Activated naive CD4-positive, alpha-beta T cell treated with anti-CD3 and anti-CD28 coated beads for 36 hours (primary cell): ENCODE measurements at regions of chr19 and their contacts with region 1.

Region 1: GRCh38 chr19:2061495-2062381 is 10.7 kb upstream of the MKNK2 start:
- DNase-seq: peak; percentile 99
- H3K4me3 Mint-ChIP-seq: peak overlapping the region; percentile 87
- H3K27ac Mint-ChIP-seq: peak overlapping the region; percentile 86
- H3K4me1 Mint-ChIP-seq: peaks cover 36% of the 10 kb centered on the region
- H3K27me3 Mint-ChIP-seq: no peaks in the 10 kb centered on the region

Region 2: GRCh38 chr19:1884719-1885334 is 176.9 kb before region 1 on chr19:
- CTCF ChIA-PET with region 1: no interaction called
- intact Hi-C with region 1: loop called (anchors 5 kb)
- DNase-seq: no peak
- H3K4me3 Mint-ChIP-seq: peak overlapping the region; percentile 96
- H3K27ac Mint-ChIP-seq: peak overlapping the region; percentile 95
- H3K4me1 Mint-ChIP-seq: peaks cover 27% of the 10 kb centered on the region
- H3K27me3 Mint-ChIP-seq: no peaks in the 10 kb centered on the region

Region 3: DNA sequence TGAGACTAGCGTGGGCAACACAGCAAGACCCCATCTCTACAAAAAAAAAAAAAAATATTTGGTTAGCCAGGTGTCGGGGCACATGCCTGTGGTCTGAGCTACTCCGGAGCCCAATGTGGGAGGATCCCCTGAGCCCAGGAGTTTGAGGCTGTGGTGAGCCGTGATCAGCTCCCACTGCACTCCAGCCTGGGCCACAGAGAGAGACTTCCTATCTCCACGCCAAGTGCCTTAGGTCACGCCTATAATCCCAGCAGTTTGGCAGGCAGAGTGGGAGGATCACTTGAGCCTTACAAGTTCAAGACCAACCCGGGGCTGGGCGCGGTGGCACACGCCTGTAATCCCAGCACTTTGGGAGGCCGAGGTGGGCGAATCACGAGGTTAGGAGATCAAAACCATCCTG is 165.2 kb before region 1 on chr19:
- CTCF ChIA-PET with region 1: no interaction called
- intact Hi-C with region 1: loop called (anchors 5 kb)
- DNase-seq: no peak
- H3K4me3 Mint-ChIP-seq: peak overlapping the region; percentile 85
- H3K27ac Mint-ChIP-seq: peak overlapping the region; percentile 95
- H3K4me1 Mint-ChIP-seq: peaks cover 28% of the 10 kb centered on the region
- H3K27me3 Mint-ChIP-seq: no peaks in the 10 kb centered on the region

Region 4: GRCh38 chr19:2041683-2042484 is 19.9 kb before region 1 on chr19:
- CTCF ChIA-PET with region 1: no interaction called
- intact Hi-C with region 1: loop called (anchors 1 kb)
- DNase-seq: peak; percentile 99
- H3K4me3 Mint-ChIP-seq: peak overlapping the region; percentile 81
- H3K27ac Mint-ChIP-seq: peak overlapping the region; percentile 92
- H3K4me1 Mint-ChIP-seq: peaks cover 31% of the 10 kb centered on the region
- H3K27me3 Mint-ChIP-seq: no peaks in the 10 kb centered on the region

Region 5: GRCh38 chr19:2050991-2051772 is 10.6 kb before region 1 on chr19 and contains the start of gene MKNK2:
- CTCF ChIA-PET with region 1: interaction called, 4 read pairs
- intact Hi-C with region 1: loop called (anchors 1 kb)
- DNase-seq: peak; percentile 93
- H3K4me3 Mint-ChIP-seq: peak within 1 kb of the TSS; percentile 85
- H3K27ac Mint-ChIP-seq: peak within 1 kb of the TSS; percentile 93
- H3K4me1 Mint-ChIP-seq: peaks cover 53% of the 10 kb centered on the region
- H3K27me3 Mint-ChIP-seq: no peaks in the 10 kb centered on the region
- total RNA-seq, gene MKNK2: 155 to 157 TPM

Region 6: DNA sequence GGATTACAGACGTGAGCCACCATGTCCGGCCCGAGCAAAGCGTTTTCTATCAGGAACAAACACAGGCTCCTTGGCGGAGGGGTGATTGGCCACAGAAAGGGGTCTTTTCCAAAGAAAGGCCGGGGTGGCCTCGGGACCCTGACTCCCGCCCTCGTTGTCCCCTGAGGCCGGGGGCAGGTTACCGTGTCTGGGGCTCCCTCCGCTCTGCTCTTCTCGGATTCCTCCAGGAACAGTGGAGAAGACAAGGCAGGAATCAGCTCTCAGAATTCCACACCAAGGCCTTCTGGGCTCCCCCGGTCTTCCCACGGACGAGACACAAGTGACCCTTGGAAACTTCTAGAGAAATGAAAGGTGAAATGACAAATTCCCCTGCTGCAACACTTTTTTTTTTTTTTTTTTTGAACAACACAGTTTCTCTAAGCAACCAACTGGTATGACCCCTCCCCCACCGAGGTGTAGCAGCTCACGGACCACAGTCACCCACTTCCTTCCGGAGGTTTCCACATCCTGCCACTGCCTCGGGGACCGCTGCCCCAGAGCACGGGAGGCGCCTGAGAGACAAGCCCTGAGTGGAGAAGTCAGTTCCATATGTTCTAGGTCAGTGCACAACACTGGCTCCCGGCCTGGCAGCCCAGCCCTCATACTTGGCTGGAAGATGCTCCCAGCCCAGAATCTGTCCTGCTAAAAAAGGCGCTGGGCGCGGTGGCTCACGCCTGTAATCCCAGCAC is 23.4 kb after region 1 on chr19:
- CTCF ChIA-PET with region 1: no interaction called
- intact Hi-C with region 1: loop called (anchors 2 kb)
- DNase-seq: peak; percentile 97
- H3K4me3 Mint-ChIP-seq: peak overlapping the region; percentile 93
- H3K27ac Mint-ChIP-seq: peak overlapping the region; percentile 98
- H3K4me1 Mint-ChIP-seq: peaks cover 65% of the 10 kb centered on the region
- H3K27me3 Mint-ChIP-seq: no peaks in the 10 kb centered on the region